Vagina (tissue), 2 donors: ENCODE measurements at regions of chr9 and their contacts with region 1.

Region 1: DNA sequence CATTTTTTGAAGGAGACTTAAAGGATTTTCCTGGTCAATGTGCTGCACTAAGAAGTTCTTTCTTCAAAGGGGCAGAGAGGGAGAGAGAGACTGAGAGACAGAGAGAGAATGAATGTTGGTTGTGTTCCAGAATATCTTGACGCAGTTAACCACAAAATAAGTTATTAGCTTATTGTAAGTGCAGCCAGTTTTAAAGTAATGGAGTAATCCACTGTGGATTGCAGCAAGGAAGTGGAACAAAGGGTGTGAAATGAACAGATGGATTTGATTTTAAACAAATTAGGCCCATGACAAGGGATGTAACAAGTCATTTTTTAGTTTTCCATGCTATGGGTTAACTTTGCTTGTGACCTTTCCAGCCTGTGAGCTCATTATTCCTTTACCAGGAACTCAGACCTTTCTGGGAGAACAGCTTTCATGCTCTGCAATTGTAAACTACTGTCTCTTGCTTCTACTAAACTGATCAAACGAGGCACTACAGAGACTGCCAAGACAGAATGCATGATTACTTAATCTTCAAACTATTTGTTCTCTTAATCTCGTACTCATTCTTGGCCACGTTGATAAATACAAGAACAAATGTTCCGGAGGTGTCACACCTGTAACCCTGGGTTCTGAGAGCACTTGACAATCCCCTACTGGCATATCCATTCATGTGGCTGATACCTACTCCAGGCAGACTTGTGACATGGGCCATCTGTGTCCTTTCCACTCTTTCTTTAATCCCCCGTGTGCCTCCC is 131.1 kb downstream of the TLE1 start:
- DNase-seq: no peak
- H3K4me3 ChIP-seq: no peak overlapping the region
- H3K27ac ChIP-seq: no peak overlapping the region
- H3K4me1 ChIP-seq: peaks cover 27% of the 10 kb centered on the region
- H3K27me3 ChIP-seq: no peaks in the 10 kb centered on the region
- CTCF ChIP-seq: no peak
- POLR2A ChIP-seq: no peak

Region 2: GRCh38 chr9:81609782-81610739 is 51.8 kb after region 1 on chr9:
- intact Hi-C with region 1: loop called (anchors 5 kb)
- DNase-seq: no peak
- H3K4me3 ChIP-seq: no peak overlapping the region
- H3K27ac ChIP-seq: no peak overlapping the region
- H3K4me1 ChIP-seq: peaks cover 22% of the 10 kb centered on the region
- H3K27me3 ChIP-seq: no peaks in the 10 kb centered on the region
- CTCF ChIP-seq: no peak
- POLR2A ChIP-seq: no peak

Region 3: DNA sequence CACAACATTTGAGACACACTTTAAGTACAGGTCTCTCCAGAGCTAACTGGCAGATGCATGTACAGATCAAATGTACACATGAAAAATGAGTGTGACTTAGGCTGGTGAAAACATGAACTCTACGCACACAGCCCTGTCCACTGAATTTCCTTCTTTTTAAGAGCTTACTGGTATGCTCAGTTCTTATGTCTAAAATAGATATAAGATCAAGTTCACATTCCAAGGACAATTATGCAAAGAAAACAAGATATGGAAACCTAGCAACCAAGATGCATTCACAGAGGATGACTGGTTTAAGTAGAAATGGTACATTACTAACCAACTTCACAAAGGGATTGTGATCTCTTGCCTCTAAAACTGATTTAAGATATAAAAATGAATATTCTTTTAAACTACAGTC is 74.3 kb after region 1 on chr9:
- intact Hi-C with region 1: no loop called
- DNase-seq: no peak
- H3K4me3 ChIP-seq: no peak overlapping the region
- H3K27ac ChIP-seq: no peak overlapping the region
- H3K4me1 ChIP-seq: no peaks in the 10 kb centered on the region
- H3K27me3 ChIP-seq: no peaks in the 10 kb centered on the region
- CTCF ChIP-seq: no peak
- POLR2A ChIP-seq: no peak

Region 4: DNA sequence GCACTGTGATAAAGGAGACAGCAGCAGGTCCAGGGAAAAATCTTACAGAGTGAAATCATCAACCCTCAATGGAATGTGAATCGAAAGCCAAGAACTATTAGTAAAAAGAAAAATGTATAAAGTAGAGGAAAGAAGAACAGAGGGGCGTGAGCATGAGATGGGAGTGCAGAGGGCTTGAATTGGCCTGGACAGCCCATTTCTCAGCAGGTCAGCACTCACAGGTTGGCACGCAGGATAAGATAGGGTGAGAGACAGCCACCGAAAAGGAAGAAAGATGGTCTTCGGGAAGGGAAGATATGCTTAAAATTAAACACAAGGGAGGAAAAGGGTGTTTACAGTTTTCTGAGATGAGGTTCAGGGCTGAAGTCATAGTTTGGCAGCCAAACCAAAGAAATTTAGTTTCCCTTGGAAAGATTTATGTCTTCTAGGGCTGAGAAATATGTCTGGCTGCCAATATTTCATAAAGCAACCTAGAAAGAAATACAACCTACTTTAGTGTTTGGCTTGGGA is 955.0 kb after region 1 on chr9:
- intact Hi-C with region 1: loop called (anchors 10 kb)
- DNase-seq: no peak
- H3K4me3 ChIP-seq: no peak overlapping the region
- H3K27ac ChIP-seq: peak overlapping the region; percentile 26
- H3K4me1 ChIP-seq: peaks cover 21% of the 10 kb centered on the region
- H3K27me3 ChIP-seq: no peaks in the 10 kb centered on the region
- CTCF ChIP-seq: no peak
- POLR2A ChIP-seq: no peak